Ovary (tissue), 10 donors: ENCODE measurements at regions of chr11 and their contacts with region 1.

Region 1: DNA sequence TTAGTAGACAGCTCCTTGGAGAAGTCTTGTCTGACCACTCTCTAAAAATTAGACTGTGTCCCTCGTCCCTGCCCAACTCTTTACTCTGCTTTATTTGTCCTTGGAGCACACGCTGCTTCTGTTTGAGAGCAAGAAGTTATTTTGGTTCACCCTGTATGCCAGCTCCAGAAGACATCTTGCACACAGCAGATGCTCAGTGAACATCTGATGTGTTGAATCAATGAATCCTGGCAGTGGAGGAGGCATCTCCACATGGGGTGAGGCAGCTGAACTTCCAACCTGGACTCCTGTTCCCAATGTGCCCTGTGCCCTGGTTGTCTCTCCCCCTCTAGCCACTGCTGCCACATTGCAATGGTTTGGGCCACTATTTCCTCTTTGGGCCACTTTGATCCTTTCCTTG is 213.6 kb downstream of the CEP164 start:
- DNase-seq: no peak
- H3K4me3 ChIP-seq: no peak overlapping the region
- H3K27ac ChIP-seq: no peak overlapping the region
- H3K4me1 ChIP-seq: no peaks in the 10 kb centered on the region
- H3K27me3 ChIP-seq: no peaks in the 10 kb centered on the region
- CTCF ChIP-seq: no peak
- EP300 ChIP-seq: no peak
- POLR2A ChIP-seq: no peak

Region 2: GRCh38 chr11:117610045-117610444 is 68.8 kb after region 1 on chr11:
- intact Hi-C with region 1: no loop called
- DNase-seq: no peak
- H3K4me3 ChIP-seq: no peak overlapping the region
- H3K27ac ChIP-seq: no peak overlapping the region
- H3K4me1 ChIP-seq: no peaks in the 10 kb centered on the region
- H3K27me3 ChIP-seq: no peaks in the 10 kb centered on the region
- CTCF ChIP-seq: no peak
- EP300 ChIP-seq: no peak
- POLR2A ChIP-seq: no peak

Region 3: DNA sequence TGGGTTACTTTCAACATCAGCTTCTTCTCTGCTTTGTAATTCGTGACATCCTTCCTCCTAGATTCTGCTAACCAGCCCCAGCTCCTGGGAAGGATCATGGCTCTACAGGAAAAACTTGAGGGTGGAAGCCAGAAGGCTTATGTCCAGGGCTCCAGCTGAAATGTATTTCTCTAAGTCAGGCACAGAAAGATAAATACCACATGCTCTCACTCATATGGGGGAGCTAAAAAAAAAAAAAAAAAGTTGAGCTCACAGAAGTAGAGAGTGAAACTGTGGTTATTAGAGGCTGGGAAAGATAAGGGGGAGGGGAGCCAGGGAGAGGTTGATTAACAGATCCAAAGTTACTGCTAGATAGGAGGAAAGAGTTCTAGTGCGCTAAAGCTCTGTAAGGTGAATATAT is 180.9 kb after region 1 on chr11:
- intact Hi-C with region 1: loop called in 1 of 4 experiments (anchors 1 kb)
- DNase-seq: peak in 2 of 5 donors; percentile 28 to 29
- H3K4me3 ChIP-seq: no peak overlapping the region
- H3K27ac ChIP-seq: no peak overlapping the region
- H3K4me1 ChIP-seq: peaks cover 4% of the 10 kb centered on the region
- H3K27me3 ChIP-seq: no peaks in the 10 kb centered on the region
- CTCF ChIP-seq: no peak
- EP300 ChIP-seq: no peak
- POLR2A ChIP-seq: no peak